ENCODE measurements at regions of chr6 and their contacts with region 1.

Region 1: DNA sequence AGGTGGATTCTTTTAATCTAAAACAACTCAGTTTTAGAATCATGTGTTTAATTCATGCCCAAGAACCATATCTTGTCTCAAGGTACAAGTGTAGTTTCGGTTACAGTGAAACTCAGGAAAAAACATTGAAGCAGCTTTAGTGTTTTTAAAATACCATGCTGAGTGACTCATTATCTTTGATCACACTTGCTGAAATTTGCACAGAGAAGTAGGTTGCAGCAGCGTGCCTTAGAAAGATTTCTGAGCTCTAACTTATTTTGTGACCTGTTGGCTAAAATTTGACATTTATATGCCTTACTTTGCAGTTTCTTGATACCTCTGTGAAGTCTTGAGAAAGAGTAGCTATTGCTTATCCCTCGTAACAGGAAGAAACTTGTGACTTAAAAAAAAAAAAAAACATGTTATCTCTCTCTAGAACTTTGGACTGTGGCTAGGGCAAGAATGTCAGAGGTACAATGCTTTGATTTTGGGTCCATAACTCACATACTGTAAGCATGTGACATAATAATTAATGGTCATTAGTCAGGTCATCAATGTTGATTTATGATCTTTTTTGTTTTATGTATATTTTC is 34.5 kb upstream of the FUCA2 start:
- DNase-seq: no peak
- ATAC-seq: no peak
- H3K4me3 Mint-ChIP-seq: no peak overlapping the region
- H3K27ac Mint-ChIP-seq: no peak overlapping the region
- H3K4me1 Mint-ChIP-seq: peaks cover 8% of the 10 kb centered on the region
- H3K27me3 Mint-ChIP-seq: no peaks in the 10 kb centered on the region
- CTCF ChIP-seq: no peak

Region 2: DNA sequence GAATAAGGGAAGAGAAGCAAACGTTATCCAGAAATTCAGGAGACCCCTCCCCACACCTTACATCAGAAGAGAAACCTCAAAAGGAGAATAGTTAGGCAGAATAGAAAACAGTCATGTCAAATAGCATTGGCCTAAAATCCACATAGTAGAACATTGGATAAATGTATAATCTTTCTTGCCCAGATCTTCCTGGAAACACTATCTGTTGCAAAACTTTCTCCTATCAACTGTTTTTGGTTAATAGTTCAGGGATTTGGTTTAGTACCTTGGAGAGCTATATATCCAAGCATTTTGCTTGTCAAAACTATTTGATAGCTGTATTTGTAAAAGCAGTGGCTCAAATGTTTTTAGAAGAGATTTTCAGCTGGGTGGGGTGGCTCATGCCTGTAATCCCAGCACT is 57.4 kb after region 1 on chr6:
- CTCF ChIA-PET with region 1: no interaction called
- POLR2A ChIA-PET with region 1: no interaction called
- intact Hi-C with region 1: loop called (anchors 2 kb)
- DNase-seq: no peak
- ATAC-seq: no peak
- H3K4me3 Mint-ChIP-seq: no peak overlapping the region
- H3K27ac Mint-ChIP-seq: no peak overlapping the region
- H3K4me1 Mint-ChIP-seq: peaks cover 1% of the 10 kb centered on the region
- H3K27me3 Mint-ChIP-seq: no peaks in the 10 kb centered on the region
- CTCF ChIP-seq: no peak

Measured in activated B cell treated with CpG ODN at 0.5 μM for 24 hours (primary cell).